ENCODE measurements at regions of chr2 and their contacts with region 1.

Region 1: GRCh38 chr2:96259497-96259921 is 6.3 kb downstream of the TMEM127 start:
- DNase-seq: no peak
- H3K4me3 ChIP-seq: no peak overlapping the region
- H3K27ac ChIP-seq: peak overlapping the region; percentile 79 to 92 (median 88)
- H3K4me1 ChIP-seq: peaks cover 31 to 96% (median 57%) of the 10 kb centered on the region in 3 donors
- H3K27me3 ChIP-seq: no peaks in the 10 kb centered on the region
- CTCF ChIP-seq: no peak
- POLR2A ChIP-seq: no peak

Region 2: DNA sequence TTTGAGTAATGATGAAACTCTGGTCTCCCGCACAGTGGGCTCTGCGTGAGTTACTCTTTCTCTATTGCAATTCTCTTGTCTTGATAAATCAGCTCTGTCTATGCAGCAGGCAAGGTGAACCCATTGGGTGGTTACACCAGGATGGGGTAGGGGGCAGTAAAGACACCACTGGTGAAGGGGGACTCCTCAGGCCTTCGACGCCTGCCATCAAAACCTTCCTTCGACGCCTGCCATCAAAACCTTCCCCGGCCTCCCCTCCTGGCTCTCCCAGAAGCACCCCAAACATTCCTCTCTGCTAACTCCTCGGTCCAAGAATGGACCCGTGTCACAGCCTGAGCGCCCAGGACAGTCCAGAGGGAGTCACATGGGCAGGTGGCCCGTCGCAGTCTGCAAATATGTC is 46.1 kb before region 1 on chr2:
- intact Hi-C with region 1: loop called (anchors 5 kb)
- DNase-seq: no peak
- H3K4me3 ChIP-seq: no peak overlapping the region
- H3K27ac ChIP-seq: no peak overlapping the region
- H3K4me1 ChIP-seq: peaks cover 4 to 16% (median 9%) of the 10 kb centered on the region in 3 donors
- H3K27me3 ChIP-seq: no peaks in the 10 kb centered on the region
- CTCF ChIP-seq: no peak
- POLR2A ChIP-seq: no peak

Measured in esophagus squamous epithelium (tissue), 5 donors.